ENCODE measurements at regions of chr9 and their contacts with region 1.

Region 1: DNA sequence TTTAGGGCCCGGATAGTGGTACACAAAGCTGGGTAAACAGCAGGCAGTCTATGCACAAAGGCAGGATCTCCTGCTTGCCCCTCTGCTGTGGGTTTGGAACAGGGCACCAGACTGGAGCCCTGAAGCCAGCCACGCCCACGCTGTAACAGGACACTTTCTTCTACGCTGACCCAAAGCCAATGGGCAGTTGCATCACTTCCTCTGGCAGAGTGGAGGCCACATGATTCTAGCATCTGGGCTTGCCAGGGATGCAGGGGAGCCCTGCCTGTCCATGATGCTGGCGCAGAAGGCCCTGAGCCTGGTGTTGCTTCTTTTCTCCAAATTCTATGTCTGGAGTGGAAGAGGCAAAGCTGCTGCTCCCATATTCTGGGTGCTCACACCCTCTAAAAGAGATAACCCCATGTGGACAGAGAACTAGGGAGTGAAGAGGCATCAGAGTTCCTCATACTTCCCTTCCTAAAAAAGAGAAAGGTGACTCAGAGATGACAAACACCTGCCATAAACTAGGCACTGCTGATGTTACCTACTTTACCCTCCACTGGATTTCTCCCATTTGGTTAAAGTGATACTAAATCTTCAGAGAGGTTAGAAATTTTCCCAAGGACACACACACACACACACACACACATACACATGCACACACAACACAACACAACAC is 260.3 kb upstream of the KLF4 start:
- DNase-seq: peak; percentile 96
- H3K4me3 ChIP-seq: no peak overlapping the region
- H3K27ac ChIP-seq: peak overlapping the region; percentile 75 to 88 (median 83)
- H3K4me1 ChIP-seq: peaks cover 0 to 36% (median 34%) of the 10 kb centered on the region in 4 donors
- H3K27me3 ChIP-seq: no peaks in the 10 kb centered on the region
- CTCF ChIP-seq: no peak
- EP300 ChIP-seq: peak in 2 of 4 donors; percentile 29 to 56
- POLR2A ChIP-seq: no peak

Region 2: DNA sequence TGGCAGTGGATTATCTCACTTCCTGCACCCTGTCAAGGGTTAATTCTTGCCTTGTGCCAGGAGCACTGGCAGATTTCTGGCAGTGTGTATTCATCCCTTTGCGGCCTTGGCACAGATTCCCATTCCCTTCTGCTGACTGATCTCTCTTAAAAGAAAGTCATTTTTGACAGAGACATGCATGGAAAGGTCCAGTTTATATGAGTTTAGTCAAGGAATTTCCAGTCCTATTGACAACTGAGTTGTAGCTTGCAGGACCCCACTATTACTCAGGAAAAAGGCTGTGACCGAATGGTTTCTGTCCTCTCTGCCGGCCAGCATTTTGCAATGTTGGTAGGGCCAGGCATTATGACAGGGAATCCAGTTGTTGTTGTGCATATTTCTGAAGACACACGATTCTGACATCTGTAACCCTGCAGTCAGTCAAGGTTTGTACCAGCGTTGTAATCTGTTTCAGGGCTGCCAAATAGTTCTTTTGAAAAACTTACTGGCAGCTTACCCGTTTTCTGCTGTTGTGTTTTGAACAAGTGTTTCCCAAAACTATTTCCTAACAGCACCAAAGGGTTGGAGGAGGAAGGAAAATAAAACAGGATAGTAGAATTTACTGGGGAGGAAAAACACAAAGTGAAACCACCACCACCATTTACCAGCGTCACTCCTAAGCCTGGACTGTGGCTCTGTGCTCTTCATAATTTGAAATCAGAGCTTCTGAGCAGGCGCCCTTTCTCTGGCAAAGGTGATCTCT is 17.0 kb before region 1 on chr9:
- intact Hi-C with region 1: loop called (anchors 2 kb)
- DNase-seq: peak; percentile 82
- H3K4me3 ChIP-seq: peak overlapping the region in 3 of 4 donors; percentile 10 to 22 (median 14)
- H3K27ac ChIP-seq: peak overlapping the region; percentile 70 to 81 (median 80)
- H3K4me1 ChIP-seq: peaks cover 0 to 38% (median 18%) of the 10 kb centered on the region in 4 donors
- H3K27me3 ChIP-seq: no peaks in the 10 kb centered on the region
- CTCF ChIP-seq: no peak
- EP300 ChIP-seq: peak in 1 of 4 donors; percentile 6
- POLR2A ChIP-seq: no peak

Region 3: GRCh38 chr9:107883496-107884124 is 133.7 kb after region 1 on chr9:
- intact Hi-C with region 1: no loop called
- DNase-seq: no peak
- H3K4me3 ChIP-seq: no peak overlapping the region
- H3K27ac ChIP-seq: no peak overlapping the region
- H3K4me1 ChIP-seq: no peaks in the 10 kb centered on the region
- H3K27me3 ChIP-seq: no peaks in the 10 kb centered on the region
- CTCF ChIP-seq: no peak
- EP300 ChIP-seq: no peak
- POLR2A ChIP-seq: no peak

Region 4: DNA sequence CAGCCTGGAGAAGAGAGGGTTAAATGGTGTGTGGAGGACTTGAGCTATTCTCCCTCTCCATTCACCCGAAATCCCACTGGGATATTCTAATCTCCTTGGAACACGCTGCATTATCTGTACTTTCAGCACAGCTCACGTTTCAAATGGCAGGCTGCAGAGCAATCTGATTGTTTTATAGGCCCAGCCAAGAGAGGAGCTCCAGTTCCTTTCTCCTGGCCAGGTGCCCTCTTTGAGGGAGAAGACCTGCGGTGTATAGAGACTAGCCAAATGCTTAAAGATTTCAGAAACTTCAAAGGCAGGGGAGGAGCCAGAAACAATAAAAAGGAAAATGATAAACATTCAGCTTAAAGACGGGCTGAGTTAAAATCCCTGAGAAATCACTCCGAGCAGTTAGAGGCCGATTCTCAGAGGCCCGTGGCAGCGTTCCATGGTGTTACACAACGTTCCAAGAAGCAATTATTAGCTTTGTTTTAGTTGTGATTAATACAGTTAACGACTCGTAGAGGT is 303.7 kb after region 1 on chr9:
- intact Hi-C with region 1: loop called (anchors 5 kb)
- DNase-seq: peak; percentile 92
- H3K4me3 ChIP-seq: no peak overlapping the region
- H3K27ac ChIP-seq: peak overlapping the region; percentile 59 to 77 (median 74)
- H3K4me1 ChIP-seq: peaks cover 0 to 68% (median 57%) of the 10 kb centered on the region in 4 donors
- H3K27me3 ChIP-seq: no peaks in the 10 kb centered on the region
- CTCF ChIP-seq: no peak
- EP300 ChIP-seq: peak in 2 of 4 donors; percentile 45 to 56
- POLR2A ChIP-seq: no peak

Region 5: GRCh38 chr9:108142504-108143201 is 392.7 kb after region 1 on chr9:
- intact Hi-C with region 1: loop called (anchors 2 kb)
- DNase-seq: peak; percentile 97
- H3K4me3 ChIP-seq: no peak overlapping the region
- H3K27ac ChIP-seq: peak overlapping the region; percentile 77 to 92 (median 84)
- H3K4me1 ChIP-seq: peaks cover 0 to 25% (median 24%) of the 10 kb centered on the region in 4 donors
- H3K27me3 ChIP-seq: no peaks in the 10 kb centered on the region
- CTCF ChIP-seq: peak in 1 of 4 experiments; percentile 51
- EP300 ChIP-seq: peak; percentile 34 to 97 (median 85)
- POLR2A ChIP-seq: no peak

Region 6: GRCh38 chr9:108272349-108272899 is 522.5 kb after region 1 on chr9:
- intact Hi-C with region 1: loop called (anchors 1 kb)
- DNase-seq: peak; percentile 72
- H3K4me3 ChIP-seq: peak overlapping the region in 2 of 4 donors; percentile 2 to 18
- H3K27ac ChIP-seq: peak overlapping the region; percentile 23 to 50 (median 35)
- H3K4me1 ChIP-seq: peaks cover 0 to 15% (median 6%) of the 10 kb centered on the region in 4 donors
- H3K27me3 ChIP-seq: no peaks in the 10 kb centered on the region
- CTCF ChIP-seq: peak in 3 of 4 experiments; percentile 44 to 69 (median 50)
- EP300 ChIP-seq: no peak
- POLR2A ChIP-seq: no peak

Measured in sigmoid colon (tissue), 7 donors.